ENCODE measurements at regions of chr7 and their contacts with region 1.

Region 1: GRCh38 chr7:151448261-151449252 is 8.6 kb upstream of the CRYGN start:
- DNase-seq: peak; percentile 77 to 88 (median 86)
- H3K4me3 ChIP-seq: peak overlapping the region; percentile 28 to 78 (median 58)
- H3K27ac ChIP-seq: no peak overlapping the region
- H3K4me1 ChIP-seq: peaks cover 0 to 6% (median 4%) of the 10 kb centered on the region in 4 experiments
- H3K27me3 ChIP-seq: peaks cover 0 to 11% (median 0%) of the 10 kb centered on the region in 5 experiments

Region 2: DNA sequence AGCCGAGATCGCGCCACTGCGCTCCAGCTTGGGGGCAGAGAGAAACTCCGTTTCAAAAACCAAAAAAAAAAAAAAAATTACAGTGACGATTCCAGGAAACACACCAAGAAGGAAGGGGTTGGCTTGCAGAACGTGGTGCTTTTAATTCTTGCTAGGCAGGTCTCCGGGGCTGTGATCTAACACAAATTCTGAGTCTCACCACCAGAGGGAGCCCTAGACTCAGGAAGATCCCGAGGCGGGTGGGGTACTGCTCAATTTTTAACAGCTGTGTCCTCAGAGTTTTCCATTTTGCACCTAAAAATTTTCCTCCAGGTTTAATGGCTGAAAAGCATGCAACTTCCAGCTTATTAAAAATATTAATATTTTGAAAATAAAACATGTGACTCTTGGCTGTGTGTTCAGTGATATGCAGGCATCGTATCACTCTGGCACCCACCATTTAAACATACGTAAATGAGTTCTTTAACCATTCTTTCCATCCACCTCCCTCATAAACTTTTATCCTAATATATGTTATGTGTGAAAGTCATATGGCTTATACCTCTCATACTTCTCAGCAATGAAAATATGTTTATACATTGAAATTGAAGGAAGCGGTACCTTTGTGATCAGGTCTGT is 133.4 kb before region 1 on chr7:
- CTCF ChIA-PET with region 1: interaction called, 30 read pairs
- POLR2A ChIA-PET with region 1: no interaction called
- DNase-seq: peak; percentile 84 to 93 (median 89)
- H3K4me3 ChIP-seq: peak overlapping the region in 3 of 7 experiments; percentile 45 to 56 (median 48)
- H3K27ac ChIP-seq: no peak overlapping the region
- H3K4me1 ChIP-seq: peaks cover 0 to 25% (median 9%) of the 10 kb centered on the region in 4 experiments
- H3K27me3 ChIP-seq: peaks cover 0 to 1% (median 0%) of the 10 kb centered on the region in 5 experiments

Region 3: DNA sequence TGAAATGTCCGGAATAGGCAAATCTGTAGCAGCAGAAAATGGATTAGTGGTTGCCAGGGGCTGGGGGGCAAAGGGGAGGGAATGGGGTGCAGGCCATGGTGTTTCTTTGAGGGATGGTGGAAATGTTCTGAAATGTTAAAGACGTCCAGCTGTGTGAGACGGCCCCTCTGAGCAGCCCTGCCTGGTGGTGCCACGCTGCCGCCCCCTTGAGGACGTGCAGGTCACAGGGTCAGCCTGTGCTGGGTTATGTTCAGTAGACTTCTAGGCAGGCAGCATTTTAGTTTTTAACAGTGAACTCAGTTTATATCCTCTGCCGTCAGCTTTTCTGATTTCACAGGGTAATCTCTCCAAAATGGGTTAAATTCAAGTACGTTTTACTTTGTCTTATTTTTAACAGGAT is 97.5 kb before region 1 on chr7:
- CTCF ChIA-PET with region 1: interaction called, 65 read pairs
- POLR2A ChIA-PET with region 1: interaction called, 3 read pairs
- DNase-seq: peak; percentile 31 to 38 (median 38)
- H3K4me3 ChIP-seq: no peak overlapping the region
- H3K27ac ChIP-seq: peak overlapping the region in 1 of 2 experiments; percentile 4
- H3K4me1 ChIP-seq: peaks cover 16 to 46% (median 35%) of the 10 kb centered on the region in 4 experiments
- H3K27me3 ChIP-seq: no peaks in the 10 kb centered on the region

Region 4: GRCh38 chr7:151361193-151361959 is 87.2 kb before region 1 on chr7:
- CTCF ChIA-PET with region 1: interaction called, 280 read pairs
- POLR2A ChIA-PET with region 1: no interaction called
- DNase-seq: no peak
- H3K4me3 ChIP-seq: no peak overlapping the region
- H3K27ac ChIP-seq: no peak overlapping the region
- H3K4me1 ChIP-seq: no peaks in the 10 kb centered on the region
- H3K27me3 ChIP-seq: no peaks in the 10 kb centered on the region

Region 5: DNA sequence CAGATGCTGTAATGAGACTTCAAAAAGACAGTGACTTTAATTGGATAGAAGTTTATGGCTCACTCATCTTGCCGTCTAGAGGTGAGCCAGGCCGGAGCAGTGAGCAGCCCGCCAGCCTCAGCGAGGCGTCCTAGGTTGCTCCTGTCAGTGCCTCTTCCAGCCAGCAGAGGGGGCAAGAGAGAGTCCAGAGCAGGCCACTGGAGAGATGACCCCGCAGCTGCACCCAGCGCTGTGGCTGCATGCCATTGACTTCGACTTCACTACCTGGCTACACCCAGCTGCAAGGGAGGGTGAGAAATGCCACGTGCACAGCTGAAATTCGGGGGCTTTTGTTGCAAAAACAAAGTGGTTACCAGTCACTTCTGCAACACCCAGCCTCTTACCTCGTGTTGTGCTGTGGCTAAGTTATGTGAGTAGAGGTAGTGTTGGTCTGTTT is 80.4 kb before region 1 on chr7:
- CTCF ChIA-PET with region 1: interaction called, 280 read pairs
- POLR2A ChIA-PET with region 1: no interaction called
- DNase-seq: peak; percentile 62 to 80 (median 74)
- H3K4me3 ChIP-seq: no peak overlapping the region
- H3K27ac ChIP-seq: no peak overlapping the region
- H3K4me1 ChIP-seq: no peaks in the 10 kb centered on the region
- H3K27me3 ChIP-seq: no peaks in the 10 kb centered on the region

Region 6: GRCh38 chr7:151381348-151382078 is 67.0 kb before region 1 on chr7:
- CTCF ChIA-PET with region 1: interaction called, 280 read pairs
- POLR2A ChIA-PET with region 1: no interaction called
- DNase-seq: peak in 2 of 3 donors; percentile 21 to 49
- H3K4me3 ChIP-seq: peak overlapping the region in 6 of 7 experiments; percentile 9 to 63 (median 54)
- H3K27ac ChIP-seq: no peak overlapping the region
- H3K4me1 ChIP-seq: peaks cover 0 to 21% (median 18%) of the 10 kb centered on the region in 4 experiments
- H3K27me3 ChIP-seq: peaks cover 0 to 53% (median 16%) of the 10 kb centered on the region in 5 experiments

Region 7: DNA sequence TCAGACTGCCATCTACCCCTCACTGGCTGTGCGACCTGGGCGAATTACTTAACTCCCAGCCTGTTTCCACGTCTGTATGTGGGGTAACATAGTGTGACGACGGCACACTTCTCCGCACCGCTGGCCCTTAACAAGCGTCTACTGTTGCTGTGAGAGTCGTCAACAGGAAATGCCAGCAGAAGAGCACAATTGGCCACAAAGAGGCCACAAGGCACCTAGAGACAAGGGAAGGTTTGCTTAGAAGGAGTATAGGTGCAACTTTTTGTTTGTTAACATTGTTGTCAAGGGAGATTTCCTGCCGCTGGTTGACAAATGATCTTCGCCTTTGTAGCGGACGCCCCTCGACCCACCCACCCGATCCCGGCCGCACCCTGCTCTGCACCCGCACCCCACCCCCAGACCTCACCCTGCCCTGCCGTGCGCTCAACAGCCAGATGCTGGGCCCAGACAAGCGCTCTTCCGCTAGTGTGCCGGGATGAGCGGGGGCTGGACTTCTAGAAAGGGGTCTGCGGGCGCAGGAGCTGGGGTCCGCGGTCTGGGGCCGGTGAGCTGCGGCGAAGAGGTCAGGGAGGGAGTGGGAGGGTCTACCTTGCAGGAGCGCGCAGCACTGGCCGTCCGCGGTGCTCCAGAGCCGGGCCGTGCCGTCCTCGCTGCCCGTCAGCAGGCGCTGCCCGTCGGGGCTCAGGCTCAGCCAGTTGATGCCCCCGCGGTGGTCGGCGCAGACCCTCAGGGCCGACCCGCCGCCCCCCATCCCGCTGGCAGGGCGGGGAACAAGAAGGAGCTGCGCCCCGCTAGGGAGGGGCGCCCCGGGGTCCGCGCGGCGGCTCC is 39.5 kb before region 1 on chr7:
- CTCF ChIA-PET with region 1: interaction called, 18 read pairs
- POLR2A ChIA-PET with region 1: no interaction called
- DNase-seq: peak; percentile 50 to 85 (median 75)
- H3K4me3 ChIP-seq: peak overlapping the region in 6 of 7 experiments; percentile 10 to 67 (median 61)
- H3K27ac ChIP-seq: no peak overlapping the region
- H3K4me1 ChIP-seq: peaks cover 0 to 40% (median 32%) of the 10 kb centered on the region in 4 experiments
- H3K27me3 ChIP-seq: peaks cover 0 to 72% (median 26%) of the 10 kb centered on the region in 5 experiments

Region 8: DNA sequence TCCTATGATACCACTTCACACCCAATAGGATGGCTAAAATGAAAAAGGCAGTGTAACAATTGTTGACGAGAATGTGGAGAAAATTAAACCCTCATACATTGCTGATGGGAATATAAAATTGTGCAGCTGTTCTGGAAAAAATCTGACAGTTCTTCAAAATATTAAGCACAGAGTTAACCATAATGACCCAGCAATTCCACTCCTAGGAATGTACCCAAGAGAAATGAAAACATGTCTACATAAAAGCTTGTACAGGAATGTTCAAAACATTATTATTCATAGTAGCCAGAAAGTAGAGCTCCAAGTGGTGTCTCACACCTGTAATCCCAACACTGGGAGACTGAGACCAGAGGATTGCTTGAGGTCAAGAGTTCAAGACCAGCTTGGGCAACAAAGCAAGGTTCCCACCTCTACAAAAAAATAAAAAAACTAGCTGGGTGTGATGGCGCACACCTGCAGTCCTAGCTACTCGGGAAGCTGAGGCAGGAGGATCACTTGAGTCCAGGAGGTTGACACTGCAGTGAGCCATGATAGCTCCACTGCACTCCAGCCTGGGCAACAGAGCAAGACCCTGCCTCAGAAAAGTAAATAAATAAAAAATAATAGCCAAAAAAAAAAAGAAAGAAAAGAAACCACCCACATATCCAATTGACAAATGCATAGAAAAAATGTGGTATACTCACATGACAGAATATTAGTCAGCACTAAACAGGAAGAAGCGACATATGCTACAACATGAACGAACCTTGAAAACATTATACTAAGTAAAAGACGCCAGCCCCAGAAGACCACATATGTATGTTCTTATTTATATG is 66.1 kb after region 1 on chr7:
- CTCF ChIA-PET with region 1: no interaction called
- POLR2A ChIA-PET with region 1: no interaction called
- DNase-seq: no peak
- H3K4me3 ChIP-seq: no peak overlapping the region
- H3K27ac ChIP-seq: no peak overlapping the region
- H3K4me1 ChIP-seq: peaks cover 11 to 29% (median 18%) of the 10 kb centered on the region in 4 experiments
- H3K27me3 ChIP-seq: no peaks in the 10 kb centered on the region